ENCODE measurements at regions of chr3 and their contacts with region 1.

Region 1: GRCh38 chr3:108090701-108091451 is at the start of gene CD47:
- DNase-seq: peak; percentile 98
- total RNA-seq, gene CD47: 51.4 TPM

Region 2: GRCh38 chr3:108221911-108222852 is 131.3 kb after region 1 on chr3 and contains the start of gene IFT57:
- intact Hi-C with region 1: loop called (anchors 5 kb)
- DNase-seq: peak; percentile 97
- total RNA-seq, gene IFT57: 23.1 TPM

Measured in cardiac septum (tissue), 1 donor.